ENCODE measurements at regions of chr11 and their contacts with region 1.

Region 1: GRCh38 chr11:75525596-75526541 is at the start of gene GDPD5:
- DNase-seq: peak; percentile 87 to 93 (median 93)
- ATAC-seq: peak; percentile 95 to 96
- H3K4me3 ChIP-seq: peak within 1 kb of the TSS; percentile 79
- H3K27ac ChIP-seq: no peak within 1 kb of the TSS
- H3K4me1 ChIP-seq: no peaks in the 10 kb centered on the region
- H3K27me3 ChIP-seq: no peaks in the 10 kb centered on the region
- total RNA-seq, gene GDPD5: 5.3 to 8.2 (median 6.8) TPM

Region 2: GRCh38 chr11:75394085-75394840 is 131.6 kb before region 1 on chr11:
- intact Hi-C with region 1: loop called in 3 of 4 experiments (anchors 5 kb)
- DNase-seq: no peak
- ATAC-seq: no peak
- H3K4me3 ChIP-seq: no peak overlapping the region
- H3K27ac ChIP-seq: no peak overlapping the region
- H3K4me1 ChIP-seq: no peaks in the 10 kb centered on the region
- H3K27me3 ChIP-seq: no peaks in the 10 kb centered on the region

Region 3: DNA sequence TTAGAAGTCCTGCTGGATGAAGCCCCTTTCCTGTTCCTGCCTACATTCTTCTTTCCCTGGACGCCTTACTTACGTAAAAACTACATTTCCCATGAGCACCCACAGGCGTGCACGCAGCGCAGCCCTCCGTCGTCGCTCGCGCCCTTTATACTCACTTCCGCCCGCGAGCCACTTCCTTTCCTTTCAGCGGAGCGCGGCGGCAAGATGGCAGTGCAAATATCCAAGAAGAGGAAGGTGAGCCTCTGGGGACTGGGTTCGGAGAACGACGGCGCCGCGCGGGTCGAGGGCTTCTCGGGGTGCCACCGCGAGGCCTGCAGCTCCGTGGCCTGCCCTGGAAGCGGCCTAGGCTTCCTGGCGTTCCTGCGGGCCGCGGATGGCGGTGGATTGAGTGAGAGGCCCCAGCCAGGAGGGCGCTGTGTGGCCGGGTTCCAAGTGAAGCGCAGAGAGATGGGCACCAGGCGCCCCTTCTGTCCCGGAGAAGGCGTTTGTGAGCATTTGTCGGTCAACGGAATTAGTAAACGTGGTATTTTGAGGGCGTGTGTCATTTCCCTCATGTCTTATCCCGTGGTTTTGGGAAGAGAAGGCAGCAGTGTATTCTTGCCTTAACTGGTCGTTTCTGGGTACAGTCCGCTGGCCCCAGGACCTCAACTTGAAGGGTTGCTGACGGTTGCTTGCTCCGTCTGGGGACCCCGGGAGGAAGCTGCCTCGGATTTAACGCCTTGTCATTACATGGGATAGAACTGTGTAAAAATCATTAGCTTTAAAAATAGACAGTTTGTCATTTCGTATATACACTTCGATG is 126.3 kb before region 1 on chr11 and contains the start of gene RPS3:
- intact Hi-C with region 1: loop called in 2 of 4 experiments (anchors 5 kb)
- DNase-seq: peak; percentile 93 to 97 (median 96)
- ATAC-seq: peak; percentile 96 to 98
- H3K4me3 ChIP-seq: peak within 1 kb of the TSS; percentile 75
- H3K27ac ChIP-seq: peak within 1 kb of the TSS; percentile 84
- H3K4me1 ChIP-seq: no peaks in the 10 kb centered on the region
- H3K27me3 ChIP-seq: no peaks in the 10 kb centered on the region
- total RNA-seq, gene RPS3: 1,039 to 1,263 (median 1,178) TPM

Region 4: GRCh38 chr11:75450826-75451821 is 74.7 kb before region 1 on chr11:
- intact Hi-C with region 1: loop called in 3 of 4 experiments (anchors 2 to 5 kb)
- DNase-seq: peak in 2 of 3 donors; percentile 56
- ATAC-seq: no peak
- H3K4me3 ChIP-seq: no peak overlapping the region
- H3K27ac ChIP-seq: no peak overlapping the region
- H3K4me1 ChIP-seq: no peaks in the 10 kb centered on the region
- H3K27me3 ChIP-seq: no peaks in the 10 kb centered on the region

Region 5: DNA sequence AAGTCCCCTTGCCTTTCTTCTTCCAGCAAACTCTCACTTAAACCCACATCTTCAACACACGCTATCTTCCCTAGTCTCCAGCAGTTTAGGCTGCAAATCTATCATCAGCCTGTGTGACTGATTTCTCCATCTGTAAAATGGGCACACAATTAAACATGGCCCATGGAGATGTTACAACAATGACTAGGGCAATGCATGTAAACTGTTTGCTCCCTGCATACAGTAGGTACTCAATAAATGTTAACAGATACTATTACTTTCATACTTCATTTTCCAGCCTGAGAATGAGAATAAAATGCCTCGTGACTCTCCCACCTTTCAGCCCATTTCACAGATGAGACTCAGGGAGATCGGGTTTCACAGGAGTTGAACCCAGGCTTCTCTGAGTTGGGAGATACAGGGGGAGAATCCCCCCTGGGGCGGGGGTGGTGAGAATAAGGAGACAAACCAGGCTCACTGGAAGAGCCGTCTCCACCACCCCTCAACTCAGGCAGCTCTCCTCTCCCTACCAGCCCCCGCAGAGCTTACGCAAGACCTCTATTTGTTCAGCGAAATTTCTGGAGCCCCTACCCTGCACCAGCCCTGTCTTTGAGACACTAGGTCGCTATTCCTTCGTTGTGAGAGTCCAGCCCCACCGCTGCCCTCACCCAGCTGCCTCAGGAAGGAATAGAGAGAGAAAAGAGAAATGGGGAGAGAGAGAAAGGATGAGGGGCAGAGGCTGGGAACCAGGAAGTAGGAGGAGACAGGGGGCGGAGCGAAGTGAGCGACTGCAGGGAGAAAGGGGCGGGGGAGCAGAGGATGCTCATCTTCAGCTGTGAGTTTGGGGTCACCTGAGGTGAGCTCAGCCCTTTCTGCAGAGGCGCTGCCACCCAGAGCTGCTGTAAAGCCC is 50.7 kb before region 1 on chr11:
- intact Hi-C with region 1: no loop called
- DNase-seq: peak; percentile 58 to 88 (median 82)
- ATAC-seq: peak; percentile 47 to 54
- H3K4me3 ChIP-seq: no peak overlapping the region
- H3K27ac ChIP-seq: peak overlapping the region; percentile 40
- H3K4me1 ChIP-seq: peaks cover 5% of the 10 kb centered on the region
- H3K27me3 ChIP-seq: no peaks in the 10 kb centered on the region

Region 6: DNA sequence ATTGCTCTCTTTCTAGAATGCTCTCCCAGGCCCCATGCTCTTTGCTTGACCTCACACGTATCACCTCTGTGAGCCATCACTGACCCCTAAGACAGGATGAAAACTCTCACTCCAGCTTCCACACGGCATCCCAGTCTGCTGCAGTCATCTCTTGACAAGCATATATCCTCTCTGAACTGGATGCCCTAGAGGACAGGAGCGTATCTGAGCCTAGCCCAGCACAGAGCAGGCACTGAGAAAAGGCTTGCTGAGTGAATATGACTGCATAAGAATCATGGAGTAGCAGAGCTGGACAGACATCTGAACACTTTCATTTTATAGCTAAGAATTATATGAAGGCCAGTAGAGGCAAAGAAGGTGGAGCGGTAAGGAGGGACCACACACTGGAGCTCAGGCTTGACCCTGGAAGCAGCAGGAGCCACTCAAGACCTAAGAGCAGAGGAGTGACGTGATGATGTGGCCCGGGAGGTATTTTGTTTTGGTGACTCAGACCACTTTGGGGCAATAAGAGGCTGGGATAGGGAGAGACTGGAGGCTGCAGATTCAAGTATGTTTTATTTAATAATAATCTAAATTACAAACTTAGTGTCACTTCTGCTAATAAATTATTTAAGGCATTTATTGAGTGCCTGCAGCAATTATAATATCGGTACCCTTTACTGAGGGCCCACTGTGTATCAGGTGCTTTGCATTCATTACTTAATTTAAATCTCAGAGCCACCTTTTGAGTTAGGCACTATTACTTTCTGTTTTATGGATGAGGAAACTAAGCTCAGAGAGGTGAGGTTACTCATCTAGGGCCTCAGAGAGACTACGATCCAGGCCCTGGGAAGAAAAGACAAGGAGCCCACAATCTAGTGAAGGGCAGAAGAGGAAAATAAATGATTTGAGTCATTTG is 100.4 kb after region 1 on chr11:
- intact Hi-C with region 1: no loop called
- DNase-seq: no peak
- ATAC-seq: no peak
- H3K4me3 ChIP-seq: no peak overlapping the region
- H3K27ac ChIP-seq: no peak overlapping the region
- H3K4me1 ChIP-seq: no peaks in the 10 kb centered on the region
- H3K27me3 ChIP-seq: no peaks in the 10 kb centered on the region